GM12878 (cell line): ENCODE measurements at regions of chr17 and their contacts with region 1.

Region 1: DNA sequence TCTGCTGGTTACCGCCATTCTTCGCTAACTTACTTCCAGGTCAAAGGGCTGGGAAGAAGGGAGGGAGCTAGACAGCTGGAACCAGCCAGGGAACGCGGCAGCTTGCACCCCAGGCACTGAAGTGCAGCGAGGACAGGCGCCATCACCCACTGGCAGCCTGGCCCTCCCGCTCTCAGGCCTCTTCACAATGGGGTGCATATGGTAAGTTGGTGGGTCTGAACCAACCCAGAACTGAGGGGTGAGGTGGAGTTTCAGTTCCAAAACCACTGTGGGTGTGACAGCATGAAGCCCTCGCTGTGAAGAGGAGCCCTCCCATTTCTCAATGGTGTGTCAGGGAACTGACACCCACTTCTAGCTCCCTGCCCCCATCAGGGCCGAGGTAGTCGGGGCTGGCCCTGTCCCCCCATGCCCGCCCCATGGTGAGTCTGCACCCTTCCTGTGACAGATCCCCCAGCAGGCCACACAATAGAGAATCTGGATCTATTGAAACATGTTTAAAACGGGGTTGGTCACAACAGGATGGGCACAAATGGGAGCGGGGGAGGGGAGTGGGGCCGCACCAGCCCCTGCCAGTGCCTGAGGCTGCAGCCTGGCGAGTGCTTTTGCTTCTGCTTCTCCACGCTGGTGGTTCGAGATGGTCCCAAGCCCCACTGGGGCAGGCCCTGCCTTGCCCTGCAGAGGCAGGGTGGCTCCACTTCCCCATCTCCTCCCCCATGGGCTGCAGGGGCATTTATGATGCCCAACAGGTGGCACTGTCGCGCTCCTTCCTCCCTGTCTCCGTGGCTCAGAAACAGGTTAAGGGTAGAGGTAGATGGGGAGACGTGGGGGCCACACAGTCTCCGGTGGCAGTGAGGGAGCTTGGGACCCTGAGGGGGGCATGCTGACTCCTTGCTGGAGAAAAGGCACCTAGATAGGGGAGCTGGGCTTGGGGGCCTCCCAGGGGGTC is 2.3 kb downstream of the LIMD2 start:
- DNase-seq: peak; percentile 82
- ATAC-seq: peak; percentile 60
- H3K4me3 ChIP-seq: peak overlapping the region; percentile 88
- H3K27ac ChIP-seq: peak overlapping the region; percentile 94
- H3K4me1 ChIP-seq: peaks cover 36% of the 10 kb centered on the region
- H3K27me3 ChIP-seq: no peaks in the 10 kb centered on the region
- CTCF ChIP-seq: peak; percentile 75 to 93 (median 80)
- EP300 ChIP-seq: peak in 1 of 2 experiments; percentile 50; a peak in 2 of 4 replicates
- POLR2A ChIP-seq: peak; percentile 70
- RAD21 ChIP-seq: peak; percentile 44

Region 2: GRCh38 chr17:63549946-63550807 is 147.4 kb before region 1 on chr17 and contains the start of gene DCAF7:
- CTCF ChIA-PET with region 1: interaction called, 4 read pairs
- POLR2A ChIA-PET with region 1: interaction called, 3 read pairs
- RAD21 ChIA-PET with region 1: no interaction called
- SMC1A ChIA-PET with region 1: no interaction called
- in situ Hi-C with region 1: no loop called
- intact Hi-C with region 1: loop called (anchors 10 kb)
- DNase-seq: peak; percentile 99
- ATAC-seq: peak; percentile 94
- H3K4me3 ChIP-seq: peak within 1 kb of the TSS; percentile 99
- H3K27ac ChIP-seq: peak within 1 kb of the TSS; percentile 96
- H3K4me1 ChIP-seq: peaks cover 15% of the 10 kb centered on the region
- H3K27me3 ChIP-seq: no peaks in the 10 kb centered on the region
- CTCF ChIP-seq: no peak
- EP300 ChIP-seq: 0 out of 4 replicates have a peak, but pooled peaks of 1 of the 2 experiments have one; percentile 23
- POLR2A ChIP-seq: peak; percentile 86
- RAD21 ChIP-seq: no peak
- polyA plus RNA-seq, gene DCAF7: 27.0 to 27.4 TPM

Region 3: DNA sequence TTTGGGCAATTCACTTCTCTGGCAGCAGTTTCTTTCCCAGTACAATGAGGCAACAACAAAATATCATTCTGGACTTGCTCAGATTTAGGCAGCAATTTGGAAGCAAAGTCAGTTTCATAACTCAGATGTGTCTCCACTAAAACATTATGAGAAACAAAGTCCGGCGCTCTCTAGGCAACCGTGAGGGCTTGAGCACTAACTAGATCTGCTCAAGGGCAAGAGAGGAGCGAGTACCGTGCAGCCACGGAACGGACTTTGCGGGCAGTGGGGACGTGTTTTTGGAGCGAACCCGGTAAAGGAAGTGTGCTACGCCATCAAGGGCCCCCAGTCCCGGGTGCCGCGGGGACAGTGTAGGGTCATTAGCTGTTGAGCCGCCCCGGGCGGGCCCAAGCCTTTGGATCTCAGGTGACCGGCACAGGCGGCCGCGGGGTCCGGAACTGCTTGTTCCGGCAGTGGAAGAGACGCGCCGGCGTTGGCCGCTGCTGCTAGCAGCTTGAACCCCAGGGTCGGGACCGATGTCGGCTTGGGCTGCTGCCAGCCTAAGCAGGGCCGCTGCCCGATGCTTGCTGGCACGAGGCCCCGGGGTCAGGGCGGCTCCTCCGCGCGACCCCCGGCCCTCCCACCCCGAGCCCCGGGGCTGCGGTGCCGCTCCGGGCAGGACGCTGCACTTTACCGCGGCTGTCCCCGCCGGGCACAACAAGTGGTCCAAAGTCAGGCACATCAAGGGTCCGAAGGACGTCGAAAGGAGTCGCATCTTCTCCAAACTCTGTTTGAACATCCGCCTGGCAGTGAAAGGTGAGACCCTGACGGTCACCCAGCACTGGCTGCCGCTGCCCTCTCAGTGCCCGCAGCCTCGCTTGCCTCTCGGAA is 96.8 kb before region 1 on chr17 and contains the start of gene TACO1:
- CTCF ChIA-PET with region 1: no interaction called
- POLR2A ChIA-PET with region 1: no interaction called
- RAD21 ChIA-PET with region 1: no interaction called
- SMC1A ChIA-PET with region 1: no interaction called
- in situ Hi-C with region 1: no loop called
- intact Hi-C with region 1: no loop called
- DNase-seq: peak; percentile 48
- ATAC-seq: peak; percentile 95
- H3K4me3 ChIP-seq: peak within 1 kb of the TSS; percentile 86
- H3K27ac ChIP-seq: peak within 1 kb of the TSS; percentile 59
- H3K4me1 ChIP-seq: no peaks in the 10 kb centered on the region
- H3K27me3 ChIP-seq: no peaks in the 10 kb centered on the region
- CTCF ChIP-seq: no peak
- EP300 ChIP-seq: no peak
- POLR2A ChIP-seq: peak; percentile 79
- RAD21 ChIP-seq: no peak
- polyA plus RNA-seq, gene TACO1: 8.5 to 16.1 TPM

Region 4: GRCh38 chr17:63646488-63646806 is 51.2 kb before region 1 on chr17:
- CTCF ChIA-PET with region 1: interaction called, 5 read pairs
- POLR2A ChIA-PET with region 1: interaction called, 5 read pairs
- RAD21 ChIA-PET with region 1: interaction called, 11 read pairs
- SMC1A ChIA-PET with region 1: no interaction called
- in situ Hi-C with region 1: no loop called
- intact Hi-C with region 1: no loop called
- DNase-seq: peak; percentile 59
- ATAC-seq: peak; percentile 96
- H3K4me3 ChIP-seq: no peak overlapping the region
- H3K27ac ChIP-seq: peak overlapping the region; percentile 85
- H3K4me1 ChIP-seq: peaks cover 26% of the 10 kb centered on the region
- H3K27me3 ChIP-seq: no peaks in the 10 kb centered on the region
- CTCF ChIP-seq: no peak
- EP300 ChIP-seq: peak in 1 of 2 experiments; percentile 69; a peak in 1 of 4 replicates
- POLR2A ChIP-seq: no peak
- RAD21 ChIP-seq: no peak

Region 5: DNA sequence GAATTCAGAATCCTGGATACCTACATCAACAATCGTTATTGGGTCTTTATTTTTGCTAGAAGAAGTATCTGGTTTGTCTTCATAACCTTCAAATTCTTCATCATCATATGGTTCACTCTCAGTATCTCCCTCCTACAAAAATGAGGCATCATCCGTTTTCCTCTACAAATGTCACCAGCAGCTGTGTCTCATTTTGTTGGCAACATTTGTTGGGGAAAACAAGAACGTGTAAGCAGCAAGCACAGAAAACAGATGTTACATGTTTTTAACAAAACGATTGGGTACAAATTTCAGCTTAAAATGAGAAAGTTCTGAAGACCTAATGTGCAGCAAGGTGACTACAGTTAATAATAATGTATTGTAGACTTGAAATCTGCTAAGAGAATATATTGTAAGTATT is 67.1 kb after region 1 on chr17:
- CTCF ChIA-PET with region 1: interaction called, 4 read pairs
- POLR2A ChIA-PET with region 1: interaction called, 7 read pairs
- RAD21 ChIA-PET with region 1: interaction called, 11 read pairs
- SMC1A ChIA-PET with region 1: interaction called, 3 read pairs
- in situ Hi-C with region 1: no loop called
- intact Hi-C with region 1: no loop called
- DNase-seq: no peak
- ATAC-seq: no peak
- H3K4me3 ChIP-seq: no peak overlapping the region
- H3K27ac ChIP-seq: no peak overlapping the region
- H3K4me1 ChIP-seq: no peaks in the 10 kb centered on the region; the same call in 1 of the 2 replicates
- H3K27me3 ChIP-seq: no peaks in the 10 kb centered on the region
- CTCF ChIP-seq: no peak
- EP300 ChIP-seq: no peak
- POLR2A ChIP-seq: no peak
- RAD21 ChIP-seq: no peak

Region 6: DNA sequence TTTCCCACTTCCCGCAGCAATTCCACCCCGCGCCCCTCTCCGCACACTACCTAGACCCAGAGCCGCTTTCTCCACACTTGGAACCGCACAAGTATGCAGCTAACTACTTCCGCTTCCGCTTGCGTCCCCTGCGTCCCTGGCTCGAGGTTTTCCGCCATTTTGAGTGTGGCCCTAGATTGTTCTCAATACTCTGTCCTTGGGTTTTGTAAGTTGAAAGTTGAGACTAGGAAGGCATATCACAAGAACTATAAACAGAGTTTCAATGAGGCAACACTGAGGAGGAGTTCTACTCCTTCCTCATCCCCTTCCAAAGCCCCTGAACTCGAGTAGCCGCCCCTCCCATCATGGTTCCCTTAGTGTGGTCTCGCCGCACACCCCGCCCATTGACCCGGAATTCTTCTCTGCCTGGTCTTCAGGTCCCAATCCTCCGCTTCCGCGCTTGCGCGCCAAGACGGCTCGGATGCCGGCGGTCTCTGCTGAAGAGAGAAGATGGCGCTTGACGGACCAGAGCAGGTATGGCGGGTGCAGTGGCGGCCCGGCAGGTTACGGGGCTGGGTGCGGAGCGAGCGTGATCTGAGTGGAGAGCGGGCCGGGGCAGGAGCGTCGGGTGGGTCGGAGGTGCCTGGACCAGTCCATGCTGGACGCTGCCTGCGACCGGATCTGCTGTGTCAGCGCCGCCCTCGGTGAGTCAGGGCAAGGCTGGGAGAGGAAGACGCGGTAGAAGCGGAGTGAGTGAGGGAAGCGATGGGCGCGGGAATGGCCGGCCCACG is 129.6 kb after region 1 on chr17 and contains the starts of genes FTSJ3 and PSMC5:
- CTCF ChIA-PET with region 1: interaction called, 4 read pairs
- POLR2A ChIA-PET with region 1: interaction called, 4 read pairs
- RAD21 ChIA-PET with region 1: interaction called, 4 read pairs
- SMC1A ChIA-PET with region 1: interaction called, 10 read pairs
- in situ Hi-C with region 1: no loop called
- intact Hi-C with region 1: loop called (anchors 2 kb)
- DNase-seq: peak; percentile 84
- ATAC-seq: peak; percentile 95
- H3K4me3 ChIP-seq: peak within 1 kb of the TSS; percentile 83
- H3K27ac ChIP-seq: peak within 1 kb of the TSS; percentile 95
- H3K4me1 ChIP-seq: peaks cover 17% of the 10 kb centered on the region
- H3K27me3 ChIP-seq: no peaks in the 10 kb centered on the region
- CTCF ChIP-seq: peak; percentile 60 to 73 (median 61)
- EP300 ChIP-seq: no peak
- POLR2A ChIP-seq: peak; percentile 99
- RAD21 ChIP-seq: no peak
- polyA plus RNA-seq, gene FTSJ3: 17.2 to 34.2 TPM
- polyA plus RNA-seq, gene PSMC5: 115 to 266 TPM